ENCODE measurements at regions of chr7 and their contacts with region 1.

Region 1: GRCh38 chr7:50349963-50350944 is 45.7 kb downstream of the IKZF1 start:
- DNase-seq: peak; percentile 84
- ATAC-seq: peak; percentile 90
- H3K4me3 ChIP-seq: no peak overlapping the region
- H3K27ac ChIP-seq: peak overlapping the region; percentile 86
- H3K4me1 ChIP-seq: peaks cover 31% of the 10 kb centered on the region
- H3K27me3 ChIP-seq: no peaks in the 10 kb centered on the region
- CTCF ChIP-seq: no peak
- EP300 ChIP-seq: peak; percentile 78 to 84
- POLR2A ChIP-seq: peak; percentile 44; the same call in 1 of the 2 replicates
- RAD21 ChIP-seq: 0 out of 2 replicates have a peak, but pooled peaks have one; percentile 24

Region 2: DNA sequence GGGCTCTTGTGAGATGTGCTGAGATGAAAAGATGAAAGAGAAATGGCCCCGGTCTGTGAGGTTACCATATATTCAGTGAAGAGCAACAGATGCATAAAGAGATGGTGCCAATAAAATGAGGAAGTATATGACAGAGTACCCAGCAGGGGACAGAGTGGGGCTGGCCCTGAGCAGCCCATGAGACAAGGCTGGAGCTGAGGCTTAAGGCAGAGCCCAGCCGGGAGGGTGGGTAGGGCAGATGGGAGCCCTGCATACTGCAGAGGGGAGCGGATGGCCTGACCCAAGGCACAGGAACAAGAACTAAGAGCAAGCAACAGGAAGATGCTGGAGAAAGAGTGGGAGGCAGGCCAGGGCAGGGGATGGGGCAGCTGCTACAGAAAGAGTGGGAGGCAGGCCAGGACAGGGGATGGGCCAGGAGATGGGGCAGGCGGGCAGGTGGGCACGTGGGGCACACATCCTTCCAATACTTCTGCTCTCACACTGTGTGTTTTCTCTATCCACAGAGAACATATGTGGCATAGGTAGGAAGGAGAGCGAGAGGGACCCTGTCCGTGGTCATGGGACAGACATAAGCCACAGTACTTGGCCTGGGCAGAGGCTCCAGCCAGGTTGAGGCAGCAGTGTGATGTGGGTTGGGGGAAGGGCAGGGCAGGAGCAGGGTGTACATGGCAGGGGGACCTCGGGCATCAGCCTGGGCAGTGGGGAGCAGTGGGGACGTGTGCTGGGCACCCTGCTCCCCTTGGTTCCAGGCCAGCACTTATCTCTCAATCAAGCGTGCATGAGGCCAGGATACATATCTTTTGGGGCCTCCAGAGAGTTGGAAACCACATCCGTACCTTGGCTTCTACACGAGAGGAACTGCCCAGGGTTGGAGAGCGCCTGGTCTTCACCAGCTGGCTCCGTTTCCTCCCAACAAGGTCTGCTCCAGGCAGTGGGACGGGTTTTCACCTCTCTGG is 137.3 kb before region 1 on chr7:
- CTCF ChIA-PET with region 1: interaction called, 4 read pairs
- POLR2A ChIA-PET with region 1: interaction called, 5 read pairs
- RAD21 ChIA-PET with region 1: no interaction called
- SMC1A ChIA-PET with region 1: interaction called, 12 read pairs
- in situ Hi-C with region 1: no loop called
- intact Hi-C with region 1: no loop called
- DNase-seq: no peak
- ATAC-seq: peak; percentile 70
- H3K4me3 ChIP-seq: no peak overlapping the region
- H3K27ac ChIP-seq: no peak overlapping the region
- H3K4me1 ChIP-seq: peaks cover 9% of the 10 kb centered on the region
- H3K27me3 ChIP-seq: no peaks in the 10 kb centered on the region
- CTCF ChIP-seq: peak; percentile 20 to 47 (median 25); a peak in 3 of 6 replicates
- EP300 ChIP-seq: 0 out of 4 replicates have a peak, but pooled peaks of 1 of the 2 experiments have one; percentile 11
- POLR2A ChIP-seq: no peak
- RAD21 ChIP-seq: peak; percentile 61

Region 3: GRCh38 chr7:50281680-50282445 is 68.4 kb before region 1 on chr7:
- CTCF ChIA-PET with region 1: interaction called, 7 read pairs
- POLR2A ChIA-PET with region 1: interaction called, 7 read pairs
- RAD21 ChIA-PET with region 1: interaction called, 8 read pairs
- SMC1A ChIA-PET with region 1: interaction called, 10 read pairs
- in situ Hi-C with region 1: no loop called
- intact Hi-C with region 1: no loop called
- DNase-seq: peak; percentile 81
- ATAC-seq: peak; percentile 88
- H3K4me3 ChIP-seq: peak overlapping the region; percentile 69
- H3K27ac ChIP-seq: peak overlapping the region; percentile 82
- H3K4me1 ChIP-seq: peaks cover 49% of the 10 kb centered on the region
- H3K27me3 ChIP-seq: no peaks in the 10 kb centered on the region
- CTCF ChIP-seq: no peak
- EP300 ChIP-seq: peak; percentile 35 to 72; a peak in 1 of 4 replicates
- POLR2A ChIP-seq: peak; percentile 54; the same call in 1 of the 2 replicates
- RAD21 ChIP-seq: peak; percentile 29; the same call in 1 of the 2 replicates

Region 4: DNA sequence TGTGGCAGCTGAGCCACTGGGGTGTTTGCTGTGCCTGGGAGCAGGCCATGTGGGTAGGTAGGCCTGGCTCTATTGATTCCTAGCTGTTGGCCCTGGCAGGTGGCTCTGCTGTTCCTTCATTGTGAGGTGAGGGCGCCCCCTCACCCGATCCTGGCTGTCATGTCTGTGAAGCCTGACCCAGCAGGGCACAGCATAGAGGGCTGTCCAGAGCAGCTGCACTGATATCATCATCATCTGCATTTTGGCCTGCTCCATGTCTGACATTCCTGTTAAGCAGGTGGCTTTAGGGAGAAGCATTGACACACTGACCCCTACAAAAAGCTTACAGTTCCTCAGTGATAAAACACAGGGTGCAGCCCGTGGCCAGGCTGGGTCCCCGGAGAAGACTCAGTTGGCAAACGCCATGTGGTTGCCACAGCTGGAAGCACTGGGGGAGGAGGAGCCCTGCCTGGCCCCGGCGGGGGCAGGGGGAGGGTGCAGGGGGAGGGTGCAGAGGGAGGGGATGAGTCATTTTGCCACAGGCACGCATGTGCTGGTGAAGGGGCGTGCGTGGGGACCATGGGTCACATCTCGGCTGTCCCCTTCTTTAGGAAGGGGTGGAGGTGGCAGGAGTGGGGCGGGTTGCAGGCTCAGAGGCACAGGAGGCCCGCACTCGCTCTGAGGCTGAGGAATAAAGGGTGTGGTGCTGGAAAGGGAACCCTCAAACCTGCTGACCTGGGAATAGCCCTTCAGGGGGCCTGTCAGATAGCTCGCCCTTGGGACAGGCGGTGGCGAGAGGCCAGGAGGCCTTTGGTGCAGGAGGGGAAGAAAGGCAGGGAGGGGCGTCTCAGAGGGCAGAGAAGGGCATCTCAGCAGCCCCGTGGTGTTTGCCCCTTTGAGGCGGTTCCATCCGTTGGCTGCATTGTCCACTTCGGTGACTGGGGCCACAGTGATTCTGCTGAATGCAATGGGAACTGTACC is 14.2 kb before region 1 on chr7:
- CTCF ChIA-PET with region 1: interaction called, 14 read pairs
- POLR2A ChIA-PET with region 1: interaction called, 10 read pairs
- RAD21 ChIA-PET with region 1: interaction called, 21 read pairs
- SMC1A ChIA-PET with region 1: interaction called, 80 read pairs
- in situ Hi-C with region 1: no loop called
- intact Hi-C with region 1: no loop called
- DNase-seq: no peak
- ATAC-seq: peak; percentile 13
- H3K4me3 ChIP-seq: no peak overlapping the region
- H3K27ac ChIP-seq: peak overlapping the region; percentile 75
- H3K4me1 ChIP-seq: peaks cover 75% of the 10 kb centered on the region
- H3K27me3 ChIP-seq: no peaks in the 10 kb centered on the region
- CTCF ChIP-seq: peak; percentile 4 to 30 (median 16); a peak in 3 of 6 replicates
- EP300 ChIP-seq: no peak
- POLR2A ChIP-seq: peak; percentile 45; the same call in 1 of the 2 replicates
- RAD21 ChIP-seq: peak; percentile 32; the same call in 1 of the 2 replicates

Region 5: GRCh38 chr7:50404392-50404791 is 54.1 kb after region 1 on chr7:
- CTCF ChIA-PET with region 1: no interaction called
- POLR2A ChIA-PET with region 1: no interaction called
- RAD21 ChIA-PET with region 1: no interaction called
- SMC1A ChIA-PET with region 1: no interaction called
- in situ Hi-C with region 1: no loop called
- intact Hi-C with region 1: no loop called
- DNase-seq: no peak
- ATAC-seq: 0 out of 3 replicates have a peak, but pooled peaks have one; percentile 17
- H3K4me3 ChIP-seq: no peak overlapping the region
- H3K27ac ChIP-seq: no peak overlapping the region
- H3K4me1 ChIP-seq: peaks cover 45% of the 10 kb centered on the region
- H3K27me3 ChIP-seq: no peaks in the 10 kb centered on the region
- CTCF ChIP-seq: peak in 2 of 3 experiments; percentile 23 to 26; a peak in 2 of 6 replicates
- EP300 ChIP-seq: no peak
- POLR2A ChIP-seq: no peak
- RAD21 ChIP-seq: no peak

Measured in GM12878 (cell line).